B cell (primary cell): ENCODE measurements at regions of chr12 and their contacts with region 1.

Region 1: GRCh38 chr12:123427036-123427769 is 9.3 kb downstream of the RILPL2 start:
- DNase-seq: peak; percentile 94
- ATAC-seq: peak; percentile 95
- H3K4me3 ChIP-seq: no peak overlapping the region
- H3K4me3 Mint-ChIP-seq: peak overlapping the region; percentile 74
- H3K27ac ChIP-seq: peak overlapping the region; percentile 67 to 76
- H3K27ac Mint-ChIP-seq: peak overlapping the region; percentile 95
- H3K4me1 ChIP-seq: peaks cover 23 to 29% of the 10 kb centered on the region in 2 donors
- H3K4me1 Mint-ChIP-seq: peaks cover 36% of the 10 kb centered on the region
- H3K27me3 ChIP-seq: no peaks in the 10 kb centered on the region
- H3K27me3 Mint-ChIP-seq: no peaks in the 10 kb centered on the region
- CTCF ChIP-seq: no peak

Region 2: GRCh38 chr12:122767691-122768090 is 659.5 kb before region 1 on chr12:
- CTCF ChIA-PET with region 1: no interaction called
- POLR2A ChIA-PET with region 1: no interaction called
- intact Hi-C with region 1: loop called (anchors 5 kb)
- DNase-seq: no peak
- ATAC-seq: no peak
- H3K4me3 ChIP-seq: no peak overlapping the region
- H3K4me3 Mint-ChIP-seq: no peak overlapping the region
- H3K27ac ChIP-seq: peak overlapping the region in 1 of 2 donors; percentile 40
- H3K27ac Mint-ChIP-seq: no peak overlapping the region
- H3K4me1 ChIP-seq: no peaks in the 10 kb centered on the region
- H3K4me1 Mint-ChIP-seq: no peaks in the 10 kb centered on the region
- H3K27me3 ChIP-seq: no peaks in the 10 kb centered on the region
- H3K27me3 Mint-ChIP-seq: no peaks in the 10 kb centered on the region
- CTCF ChIP-seq: no peak

Region 3: GRCh38 chr12:122834104-122834920 is 592.9 kb before region 1 on chr12:
- CTCF ChIA-PET with region 1: no interaction called
- POLR2A ChIA-PET with region 1: no interaction called
- intact Hi-C with region 1: loop called (anchors 10 kb)
- DNase-seq: peak; percentile 65
- ATAC-seq: no peak
- H3K4me3 ChIP-seq: peak overlapping the region; percentile 24 to 99 (median 45)
- H3K4me3 Mint-ChIP-seq: peak overlapping the region; percentile 98
- H3K27ac ChIP-seq: peak overlapping the region; percentile 25 to 38
- H3K27ac Mint-ChIP-seq: peak overlapping the region; percentile 88
- H3K4me1 ChIP-seq: peaks cover 32 to 35% of the 10 kb centered on the region in 2 donors
- H3K4me1 Mint-ChIP-seq: peaks cover 40% of the 10 kb centered on the region
- H3K27me3 ChIP-seq: no peaks in the 10 kb centered on the region
- H3K27me3 Mint-ChIP-seq: no peaks in the 10 kb centered on the region
- CTCF ChIP-seq: peak; percentile 34

Region 4: GRCh38 chr12:123388177-123388947 is 38.8 kb before region 1 on chr12:
- CTCF ChIA-PET with region 1: interaction called, 3 read pairs
- POLR2A ChIA-PET with region 1: interaction called, 6 read pairs
- intact Hi-C with region 1: loop called (anchors 1 kb)
- DNase-seq: peak; percentile 85
- ATAC-seq: peak; percentile 62
- H3K4me3 ChIP-seq: peak overlapping the region; percentile 60 to 78 (median 63)
- H3K4me3 Mint-ChIP-seq: peak overlapping the region; percentile 91
- H3K27ac ChIP-seq: peak overlapping the region; percentile 74 to 80
- H3K27ac Mint-ChIP-seq: peak overlapping the region; percentile 93
- H3K4me1 ChIP-seq: peaks cover 22 to 36% of the 10 kb centered on the region in 2 donors
- H3K4me1 Mint-ChIP-seq: peaks cover 38% of the 10 kb centered on the region
- H3K27me3 ChIP-seq: no peaks in the 10 kb centered on the region
- H3K27me3 Mint-ChIP-seq: no peaks in the 10 kb centered on the region
- CTCF ChIP-seq: peak; percentile 9

Region 5: GRCh38 chr12:123445388-123446351 is 18.5 kb after region 1 on chr12:
- CTCF ChIA-PET with region 1: interaction called, 7 read pairs
- POLR2A ChIA-PET with region 1: interaction called, 10 read pairs
- intact Hi-C with region 1: no loop called
- DNase-seq: peak; percentile 63
- ATAC-seq: peak; percentile 39
- H3K4me3 ChIP-seq: peak overlapping the region in 2 of 5 experiments; percentile 27 to 33
- H3K4me3 Mint-ChIP-seq: peak overlapping the region; percentile 75
- H3K27ac ChIP-seq: peak overlapping the region; percentile 64 to 68
- H3K27ac Mint-ChIP-seq: peak overlapping the region; percentile 94
- H3K4me1 ChIP-seq: peaks cover 24 to 55% of the 10 kb centered on the region in 2 donors
- H3K4me1 Mint-ChIP-seq: peaks cover 49% of the 10 kb centered on the region
- H3K27me3 ChIP-seq: no peaks in the 10 kb centered on the region
- H3K27me3 Mint-ChIP-seq: no peaks in the 10 kb centered on the region
- CTCF ChIP-seq: no peak

Region 6: DNA sequence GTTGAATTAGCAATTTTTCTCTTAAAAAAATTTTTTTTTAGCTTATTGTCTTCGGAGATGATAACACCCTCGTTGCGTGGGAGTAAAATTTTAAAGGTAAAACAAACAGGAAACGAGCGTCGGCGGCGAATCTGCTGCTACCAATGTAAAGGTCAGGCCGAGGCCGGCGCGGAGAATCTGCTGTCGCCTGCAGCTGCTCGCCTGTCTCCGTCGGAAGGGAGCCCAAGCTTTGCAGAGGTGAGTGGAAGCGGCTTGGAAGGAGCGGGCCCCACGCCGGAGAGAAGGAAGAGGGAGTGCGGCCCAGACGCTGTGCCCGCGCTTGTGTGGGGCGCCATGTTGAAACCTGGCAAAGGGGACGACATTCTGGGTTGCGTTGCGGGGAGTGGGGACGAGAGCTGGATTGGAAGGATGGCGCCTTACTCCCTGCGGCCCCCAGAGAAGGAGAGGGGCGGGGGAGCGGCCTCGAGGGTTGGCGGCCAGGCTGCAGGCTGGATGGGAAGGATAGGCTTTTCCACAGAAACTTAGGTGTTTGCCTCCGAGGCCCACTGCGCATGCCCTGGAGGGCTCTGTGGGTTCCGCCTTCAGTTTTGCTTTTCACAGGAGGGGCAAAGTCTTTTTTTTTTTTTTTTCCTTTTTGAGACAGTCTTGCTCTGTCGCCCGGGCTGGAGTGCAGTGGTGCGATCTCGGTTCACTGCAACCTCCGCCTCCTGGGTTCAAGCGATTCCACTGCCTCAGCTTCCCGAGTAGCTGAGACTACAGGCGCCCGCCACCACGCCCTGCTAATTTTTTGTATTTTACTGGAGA is 31.0 kb after region 1 on chr12 and contains the start of gene SNRNP35:
- CTCF ChIA-PET with region 1: interaction called, 16 read pairs
- POLR2A ChIA-PET with region 1: interaction called, 28 read pairs
- intact Hi-C with region 1: loop called (anchors 1 kb)
- DNase-seq: peak; percentile 96
- ATAC-seq: peak; percentile 79
- H3K4me3 ChIP-seq: peak within 1 kb of the TSS; percentile 76 to 99 (median 95)
- H3K4me3 Mint-ChIP-seq: peak within 1 kb of the TSS; percentile 99
- H3K27ac ChIP-seq: peak within 1 kb of the TSS; percentile 92 to 98
- H3K27ac Mint-ChIP-seq: peak within 1 kb of the TSS; percentile 100
- H3K4me1 ChIP-seq: peaks cover 12 to 17% of the 10 kb centered on the region in 2 donors
- H3K4me1 Mint-ChIP-seq: peaks cover 26% of the 10 kb centered on the region
- H3K27me3 ChIP-seq: no peaks in the 10 kb centered on the region
- H3K27me3 Mint-ChIP-seq: no peaks in the 10 kb centered on the region
- CTCF ChIP-seq: no peak
- total RNA-seq, gene SNRNP35: 57.8 and 58.2 TPM in 2 replicates

Region 7: GRCh38 chr12:123645878-123646277 is 218.7 kb after region 1 on chr12:
- CTCF ChIA-PET with region 1: no interaction called
- POLR2A ChIA-PET with region 1: no interaction called
- intact Hi-C with region 1: no loop called
- DNase-seq: no peak
- ATAC-seq: no peak
- H3K4me3 ChIP-seq: no peak overlapping the region
- H3K4me3 Mint-ChIP-seq: no peak overlapping the region
- H3K27ac ChIP-seq: no peak overlapping the region
- H3K27ac Mint-ChIP-seq: no peak overlapping the region
- H3K4me1 ChIP-seq: no peaks in the 10 kb centered on the region
- H3K4me1 Mint-ChIP-seq: no peaks in the 10 kb centered on the region
- H3K27me3 ChIP-seq: no peaks in the 10 kb centered on the region
- H3K27me3 Mint-ChIP-seq: no peaks in the 10 kb centered on the region
- CTCF ChIP-seq: no peak